IMR-90 (cell line): ENCODE measurements at regions of chr14 and their contacts with region 1.

Region 1: DNA sequence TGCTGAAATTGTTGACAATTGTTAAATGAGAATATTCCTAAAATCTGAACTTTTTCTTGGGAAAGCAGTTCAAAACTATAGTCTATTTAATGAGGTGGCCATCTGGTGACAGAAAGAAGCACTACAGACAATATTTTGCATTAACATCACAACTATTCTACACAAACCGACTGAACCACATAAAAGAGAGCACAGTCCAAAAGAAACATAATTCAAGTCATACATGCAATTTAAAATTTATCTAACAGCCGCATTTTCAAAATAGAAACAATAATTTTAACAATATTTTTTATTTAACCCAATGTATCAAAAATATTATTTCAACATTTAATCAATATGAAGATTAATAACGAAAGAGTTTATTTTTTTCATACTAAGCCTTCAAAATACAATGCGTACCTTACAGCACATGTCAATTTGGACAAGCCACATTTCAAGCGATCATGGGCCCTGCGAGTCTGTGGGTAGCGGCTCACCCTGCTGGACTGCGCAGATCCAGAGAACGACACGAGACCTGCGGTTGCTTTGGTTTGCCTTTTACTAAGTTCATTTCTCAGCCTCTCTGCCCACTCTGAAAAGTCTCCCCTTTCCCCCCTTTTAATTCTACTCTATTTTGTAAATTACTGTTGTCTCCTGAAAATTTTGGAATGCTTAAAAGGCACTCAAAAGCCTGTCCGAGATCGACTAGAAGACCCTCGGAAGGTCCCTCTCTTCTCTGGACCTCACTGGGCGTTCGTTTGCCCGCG is 947 bp upstream of the LRRC9 start:
- DNase-seq: peak; percentile 18
- ATAC-seq: peak; percentile 85
- H3K4me3 ChIP-seq: peak overlapping the region; percentile 24; the same call in 1 of the 2 replicates
- H3K27ac ChIP-seq: no peak overlapping the region
- H3K4me1 ChIP-seq: no peaks in the 10 kb centered on the region; the same call in 1 of the 2 replicates
- H3K27me3 ChIP-seq: peaks cover 21% of the 10 kb centered on the region
- CTCF ChIP-seq: peak; percentile 44
- POLR2A ChIP-seq: no peak
- RAD21 ChIP-seq: peak; percentile 24; the same call in 1 of the 2 replicates

Region 2: GRCh38 chr14:59632381-59632780 is 286.6 kb before region 1 on chr14:
- CTCF ChIA-PET with region 1: no interaction called
- POLR2A ChIA-PET with region 1: no interaction called
- dilution Hi-C with region 1: no loop called
- in situ Hi-C with region 1: no loop called
- intact Hi-C with region 1: loop called (anchors 1 kb)
- DNase-seq: peak; percentile 6
- ATAC-seq: peak; percentile 46; the same call in 1 of the 2 replicates
- H3K4me3 ChIP-seq: no peak overlapping the region
- H3K27ac ChIP-seq: no peak overlapping the region
- H3K4me1 ChIP-seq: no peaks in the 10 kb centered on the region
- H3K27me3 ChIP-seq: peaks cover 11% of the 10 kb centered on the region
- CTCF ChIP-seq: peak; percentile 38
- POLR2A ChIP-seq: no peak
- RAD21 ChIP-seq: peak; percentile 53

Region 3: DNA sequence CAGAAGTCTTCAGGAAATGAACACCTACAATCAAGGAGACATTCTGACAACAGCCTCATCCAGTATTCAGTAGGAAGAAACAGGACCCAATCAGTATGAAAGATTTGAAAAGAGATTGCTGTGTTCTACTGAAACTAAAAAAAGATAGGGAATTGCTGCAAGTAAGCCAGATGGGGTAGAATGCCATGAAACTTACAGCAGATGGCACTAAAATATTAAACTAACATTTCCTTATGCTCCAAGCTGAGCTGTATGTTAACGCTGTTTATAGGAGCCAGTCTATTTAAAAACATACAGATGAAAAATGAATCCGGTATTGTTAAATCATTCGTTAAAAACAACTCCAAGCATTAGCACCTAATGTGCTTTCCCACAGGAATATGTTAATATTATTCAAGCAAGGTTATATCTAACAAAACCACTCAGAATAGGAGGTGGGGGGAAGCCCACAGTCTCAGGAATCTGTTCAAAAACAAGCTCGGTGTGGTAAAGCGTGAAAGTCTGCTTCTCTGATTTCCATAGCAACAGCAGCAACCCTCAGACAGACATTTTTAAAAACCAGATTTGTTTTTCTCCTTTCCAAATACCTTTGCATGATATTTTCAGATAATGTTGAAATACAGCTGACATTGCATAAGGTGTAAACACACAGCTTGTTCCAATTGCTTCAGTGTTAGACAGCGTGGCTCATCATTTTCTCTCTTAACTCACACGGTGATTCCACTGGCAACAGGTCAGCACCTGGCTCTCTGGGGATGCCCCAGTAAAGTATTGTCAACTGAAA is 211.0 kb before region 1 on chr14:
- CTCF ChIA-PET with region 1: no interaction called
- POLR2A ChIA-PET with region 1: no interaction called
- dilution Hi-C with region 1: no loop called
- in situ Hi-C with region 1: no loop called
- intact Hi-C with region 1: loop called (anchors 5 kb)
- DNase-seq: no peak
- ATAC-seq: no peak
- H3K4me3 ChIP-seq: no peak overlapping the region
- H3K27ac ChIP-seq: no peak overlapping the region
- H3K4me1 ChIP-seq: no peaks in the 10 kb centered on the region
- H3K27me3 ChIP-seq: no peaks in the 10 kb centered on the region
- CTCF ChIP-seq: no peak
- POLR2A ChIP-seq: no peak
- RAD21 ChIP-seq: no peak